ENCODE measurements at regions of chr9 and their contacts with region 1.

Region 1: GRCh38 chr9:131590908-131591844 is 45.9 kb downstream of the PRRT1B start:
- DNase-seq: peak; percentile 86 to 93
- H3K4me3 ChIP-seq: no peak overlapping the region
- H3K27ac ChIP-seq: no peak overlapping the region
- H3K4me1 ChIP-seq: peaks cover 0 to 27% (median 6%) of the 10 kb centered on the region in 4 donors
- H3K27me3 ChIP-seq: no peaks in the 10 kb centered on the region
- CTCF ChIP-seq: peak in 6 of 7 experiments; percentile 5 to 97 (median 80)
- EP300 ChIP-seq: no peak
- POLR2A ChIP-seq: no peak

Region 2: DNA sequence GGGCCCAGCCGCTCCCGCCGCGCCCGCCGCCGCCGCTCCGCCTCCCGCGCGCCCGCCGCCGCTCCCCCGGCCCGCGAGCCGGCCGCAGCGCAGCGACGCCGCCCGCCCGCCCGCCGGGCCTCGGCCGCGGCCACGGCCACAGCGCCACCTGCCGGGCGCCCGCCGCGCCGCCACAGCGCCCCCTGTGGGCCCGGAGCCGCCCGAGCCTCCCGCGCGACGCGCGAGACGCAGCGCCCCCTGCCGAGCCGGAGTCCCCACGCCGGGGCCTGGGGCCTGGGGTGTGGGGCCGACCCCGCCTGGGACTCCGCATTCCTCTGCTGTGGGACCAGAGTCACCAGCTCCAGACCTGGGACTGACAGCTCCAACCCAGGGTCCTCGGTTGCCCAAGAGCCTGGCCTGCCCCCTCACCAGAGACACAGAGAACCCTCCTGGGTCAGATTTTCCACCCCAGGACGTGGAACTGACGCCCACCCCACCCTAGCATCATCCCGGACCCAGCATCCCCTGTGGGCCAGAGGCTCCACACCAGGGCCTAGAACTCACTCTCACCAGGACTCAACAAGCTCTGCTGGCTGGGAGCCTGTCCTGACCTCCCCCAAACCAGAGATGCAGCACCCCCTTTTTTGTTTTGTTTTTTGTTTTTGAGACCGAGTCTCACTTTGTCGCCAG is 148.9 kb after region 1 on chr9 and contains the start of gene RAPGEF1:
- intact Hi-C with region 1: loop called (anchors 5 kb)
- DNase-seq: peak; percentile 78 to 79
- H3K4me3 ChIP-seq: peak within 1 kb of the TSS; percentile 59 to 66 (median 64)
- H3K27ac ChIP-seq: peak within 1 kb of the TSS; percentile 85 to 97 (median 91)
- H3K4me1 ChIP-seq: peaks cover 36 to 65% (median 56%) of the 10 kb centered on the region in 4 donors
- H3K27me3 ChIP-seq: no peaks in the 10 kb centered on the region
- CTCF ChIP-seq: peak in 5 of 7 experiments; percentile 43 to 95 (median 77)
- EP300 ChIP-seq: no peak
- POLR2A ChIP-seq: no peak
- total RNA-seq, gene RAPGEF1: 33.2 to 84.6 (median 57.1) TPM

Region 3: GRCh38 chr9:131885144-131885609 is 294.0 kb after region 1 on chr9:
- intact Hi-C with region 1: no loop called
- DNase-seq: peak; percentile 27 to 49
- H3K4me3 ChIP-seq: no peak overlapping the region
- H3K27ac ChIP-seq: peak overlapping the region in 2 of 5 donors; percentile 32 to 42
- H3K4me1 ChIP-seq: peaks cover 0 to 18% (median 7%) of the 10 kb centered on the region in 4 donors
- H3K27me3 ChIP-seq: no peaks in the 10 kb centered on the region
- CTCF ChIP-seq: no peak
- EP300 ChIP-seq: no peak
- POLR2A ChIP-seq: no peak

Measured in stomach (tissue), 19 donors.